Heart left ventricle (tissue), 16 donors: ENCODE measurements at regions of chr1 and their contacts with region 1.

Region 1: GRCh38 chr1:112674439-112674985 is at the start of gene MOV10:
- DNase-seq: peak; percentile 63 to 89 (median 77)
- ATAC-seq: peak; percentile 58 to 80 (median 70)
- H3K4me3 ChIP-seq: peak within 1 kb of the TSS; percentile 64 to 97 (median 84)
- H3K27ac ChIP-seq: peak within 1 kb of the TSS; percentile 81 to 96 (median 92)
- H3K4me1 ChIP-seq: peaks cover 0 to 39% (median 24%) of the 10 kb centered on the region in 12 donors
- H3K27me3 ChIP-seq: no peaks in the 10 kb centered on the region
- CTCF ChIP-seq: no peak
- POLR2A ChIP-seq: peak in 1 of 2 donors; percentile 22
- total RNA-seq, gene MOV10: 7.5 to 43.6 (median 13.3) TPM

Region 2: DNA sequence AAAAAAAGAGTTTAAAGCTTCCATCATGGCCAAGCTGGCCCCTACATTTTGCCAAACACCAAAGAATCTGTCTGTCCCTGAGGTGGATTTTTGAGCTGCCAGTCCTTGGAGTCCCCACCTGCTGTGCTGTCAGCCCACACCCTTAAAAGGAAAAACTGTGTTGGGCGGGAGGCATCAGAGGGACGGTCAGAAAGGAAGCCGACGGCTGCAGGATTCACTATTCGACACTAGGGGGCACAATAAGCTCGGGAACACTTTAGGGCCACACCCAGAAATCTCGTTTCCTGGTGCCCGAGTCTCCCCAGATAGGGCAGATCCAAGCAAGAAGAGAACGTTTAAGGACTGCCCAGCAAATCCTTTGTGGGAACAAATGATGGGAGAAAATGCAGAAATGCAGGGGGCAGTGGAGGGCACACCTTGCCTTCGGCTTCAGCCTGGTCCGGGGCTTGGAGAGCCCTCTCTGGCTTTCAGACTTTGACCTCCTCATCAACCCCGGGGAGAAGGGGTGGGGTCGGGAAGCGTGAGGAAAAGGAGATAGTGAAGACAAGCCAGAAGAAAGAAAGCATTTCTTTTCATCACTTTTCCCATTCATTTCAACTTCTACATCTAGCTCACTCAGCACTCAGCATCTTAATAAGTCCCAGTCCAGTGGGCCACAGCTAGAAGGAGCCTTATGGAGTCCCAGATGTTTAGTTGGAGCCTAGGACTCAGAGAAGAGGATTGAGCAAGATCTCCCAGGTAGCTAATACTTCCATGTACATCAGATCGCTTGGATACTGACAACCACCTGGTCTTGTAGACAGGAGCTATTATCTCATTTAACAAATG is 283.5 kb before region 1 on chr1:
- intact Hi-C with region 1: loop called in 2 of 10 experiments (anchors 10 kb)
- DNase-seq: peak; percentile 86 to 90 (median 89)
- ATAC-seq: peak; percentile 68 to 83 (median 80)
- H3K4me3 ChIP-seq: peak overlapping the region in 11 of 12 donors; percentile 1 to 59 (median 51)
- H3K27ac ChIP-seq: peak overlapping the region; percentile 57 to 96 (median 91)
- H3K4me1 ChIP-seq: peaks cover 0 to 68% (median 29%) of the 10 kb centered on the region in 12 donors
- H3K27me3 ChIP-seq: no peaks in the 10 kb centered on the region
- CTCF ChIP-seq: peak; percentile 86 to 97 (median 94)
- POLR2A ChIP-seq: peak in 1 of 2 donors; percentile 47

Region 3: DNA sequence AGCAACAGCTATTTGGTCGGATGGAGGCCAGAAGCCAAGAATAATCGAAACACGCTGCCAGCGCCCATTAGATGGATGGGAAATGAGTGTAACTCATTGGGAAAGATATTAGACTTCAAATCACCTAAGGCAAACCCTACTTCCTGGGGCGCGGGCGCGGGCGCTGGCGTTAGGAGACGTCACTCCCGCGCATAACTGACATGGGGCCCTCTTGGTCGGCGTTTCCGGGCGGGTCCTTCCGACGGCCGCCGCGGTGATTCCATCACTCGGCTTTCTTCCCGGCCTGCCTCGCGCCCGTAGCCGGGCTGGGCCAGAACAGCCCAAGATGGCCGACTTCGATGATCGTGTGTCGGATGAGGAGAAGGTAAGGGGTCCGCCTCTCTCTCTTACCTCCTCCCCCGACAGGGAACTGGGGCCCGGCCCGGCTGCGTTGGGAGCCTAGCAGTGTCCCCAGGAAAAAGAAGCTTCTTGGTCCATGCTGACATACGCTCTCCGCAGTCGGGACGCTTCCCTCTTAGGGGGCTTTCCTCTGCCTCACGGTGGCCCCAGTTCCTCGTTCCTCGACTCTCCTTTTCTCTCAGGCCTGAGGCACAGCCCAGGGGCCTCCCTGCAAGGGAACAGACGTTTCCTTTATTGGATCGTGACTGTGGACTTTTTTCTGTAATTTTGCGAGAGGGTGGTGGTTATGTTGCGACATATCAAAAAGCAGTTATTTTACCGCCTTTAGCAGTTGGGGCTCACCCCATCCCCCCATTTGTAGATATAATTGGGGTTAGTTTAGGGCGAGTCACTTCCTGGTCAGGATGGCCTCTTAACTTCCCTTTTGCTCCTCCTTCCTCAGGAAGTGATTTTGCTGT is 54.8 kb before region 1 on chr1 and contains the start of gene CAPZA1:
- intact Hi-C with region 1: loop called in 4 of 10 experiments (anchors 1 to 10 kb)
- DNase-seq: peak; percentile 93 to 95 (median 94)
- ATAC-seq: peak; percentile 97 to 99 (median 98)
- H3K4me3 ChIP-seq: peak within 1 kb of the TSS; percentile 71 to 99 (median 89)
- H3K27ac ChIP-seq: peak within 1 kb of the TSS; percentile 92 to 100 (median 98)
- H3K4me1 ChIP-seq: peaks cover 0 to 59% (median 46%) of the 10 kb centered on the region in 12 donors
- H3K27me3 ChIP-seq: no peaks in the 10 kb centered on the region
- CTCF ChIP-seq: no peak
- POLR2A ChIP-seq: peak in 1 of 2 donors; percentile 74
- total RNA-seq, gene CAPZA1: 23.8 to 98.4 (median 32.6) TPM

Region 4: DNA sequence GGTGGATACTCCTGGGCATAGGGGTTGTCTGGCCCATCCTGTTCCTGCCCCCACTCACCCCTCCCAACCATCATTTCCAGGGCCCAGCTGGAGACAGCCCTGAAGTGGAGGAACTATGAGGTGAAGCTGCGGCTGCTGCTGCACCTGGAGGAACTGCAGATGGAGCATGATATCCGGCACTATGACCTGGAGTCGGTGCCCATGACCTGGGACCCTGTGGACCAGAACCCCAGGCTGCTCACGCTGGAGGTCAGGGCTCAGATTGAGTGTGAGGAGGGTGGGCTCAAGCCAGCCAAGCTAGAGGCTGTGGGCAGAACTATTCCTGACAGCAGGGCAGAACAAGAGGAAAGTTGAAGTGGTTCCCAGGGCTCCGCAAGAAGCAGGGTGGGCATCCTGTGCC is 18.2 kb after region 1 on chr1:
- intact Hi-C with region 1: loop called in 1 of 10 experiments (anchors 2 kb)
- DNase-seq: no peak
- ATAC-seq: no peak
- H3K4me3 ChIP-seq: no peak overlapping the region
- H3K27ac ChIP-seq: no peak overlapping the region
- H3K4me1 ChIP-seq: peaks cover 0 to 21% (median 6%) of the 10 kb centered on the region in 12 donors
- H3K27me3 ChIP-seq: no peaks in the 10 kb centered on the region
- CTCF ChIP-seq: no peak
- POLR2A ChIP-seq: no peak

Region 5: DNA sequence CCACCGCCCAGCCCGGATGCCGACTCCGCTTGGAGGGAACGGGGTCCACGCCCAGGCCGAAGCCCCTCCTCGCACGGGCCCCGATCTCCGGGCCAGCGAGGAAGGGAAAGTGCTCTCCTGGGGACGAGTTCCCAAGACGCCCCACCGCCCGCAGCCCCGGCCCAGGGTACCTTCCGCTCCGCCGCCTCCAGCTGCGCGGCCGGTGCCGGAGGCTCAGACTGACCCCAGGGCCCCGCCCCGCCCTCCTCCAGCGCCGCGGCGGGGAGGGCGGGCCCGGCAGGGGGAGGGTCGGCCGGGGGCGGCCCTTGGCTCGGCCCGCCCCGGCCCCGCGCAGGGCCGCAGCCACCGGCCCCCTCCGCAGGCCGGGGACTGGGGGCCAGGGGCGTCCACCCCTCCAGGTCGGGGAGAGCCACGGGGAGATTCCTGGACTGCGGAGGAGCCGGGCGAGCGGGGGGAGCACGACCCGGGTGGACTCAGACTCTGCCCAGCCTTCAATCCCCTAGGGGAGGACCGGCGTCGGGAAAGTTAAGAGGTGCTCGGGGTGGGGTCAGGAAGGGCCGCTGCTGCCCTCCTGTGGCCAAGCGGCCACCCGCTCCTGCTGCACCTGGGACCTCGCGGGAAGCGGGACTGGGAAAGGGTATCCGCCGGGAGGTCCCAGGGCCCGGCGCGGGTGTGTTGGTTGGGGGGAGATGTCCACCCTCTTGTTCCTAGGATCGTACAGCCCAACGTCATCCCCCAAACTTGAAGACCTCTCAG is 32.6 kb after region 1 on chr1 and contains the start of gene RHOC:
- intact Hi-C with region 1: loop called in 8 of 10 experiments (anchors 2 to 5 kb)
- DNase-seq: peak; percentile 90 to 93 (median 92)
- ATAC-seq: peak; percentile 56 to 87 (median 74)
- H3K4me3 ChIP-seq: peak within 1 kb of the TSS; percentile 75 to 100 (median 98)
- H3K27ac ChIP-seq: peak within 1 kb of the TSS; percentile 92 to 100 (median 99)
- H3K4me1 ChIP-seq: peaks cover 3 to 49% (median 39%) of the 10 kb centered on the region in 12 donors
- H3K27me3 ChIP-seq: no peaks in the 10 kb centered on the region
- CTCF ChIP-seq: peak; percentile 83 to 97 (median 94)
- POLR2A ChIP-seq: peak; percentile 64 to 95
- total RNA-seq, gene RHOC: 147 to 432 (median 217) TPM

Region 6: DNA sequence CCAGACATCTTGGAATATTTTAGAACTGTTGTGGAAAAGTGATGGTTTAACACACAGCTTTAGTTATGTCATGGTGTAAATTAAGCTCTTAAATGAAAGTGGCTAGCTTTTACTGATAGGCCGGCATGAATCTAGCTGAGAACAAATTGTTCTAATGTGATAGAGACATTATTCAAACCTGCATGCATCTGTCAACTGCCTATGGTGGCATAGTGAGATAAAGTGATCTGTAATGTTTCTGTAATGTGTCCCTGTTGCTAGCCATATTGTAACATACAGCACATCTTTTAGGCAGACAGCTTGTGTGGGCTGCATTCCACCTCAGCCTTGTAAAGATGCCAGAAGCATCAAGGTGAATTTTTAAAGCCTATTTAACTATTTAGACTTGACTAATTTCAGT is 414.5 kb after region 1 on chr1:
- intact Hi-C with region 1: no loop called
- DNase-seq: no peak
- ATAC-seq: peak; percentile 87 to 91 (median 90)
- H3K4me3 ChIP-seq: no peak overlapping the region
- H3K27ac ChIP-seq: peak overlapping the region; percentile 25 to 85 (median 64)
- H3K4me1 ChIP-seq: peaks cover 0 to 36% (median 13%) of the 10 kb centered on the region in 12 donors
- H3K27me3 ChIP-seq: no peaks in the 10 kb centered on the region
- CTCF ChIP-seq: no peak
- POLR2A ChIP-seq: no peak